ENCODE measurements at regions of chr2 and their contacts with region 1.

Region 1: DNA sequence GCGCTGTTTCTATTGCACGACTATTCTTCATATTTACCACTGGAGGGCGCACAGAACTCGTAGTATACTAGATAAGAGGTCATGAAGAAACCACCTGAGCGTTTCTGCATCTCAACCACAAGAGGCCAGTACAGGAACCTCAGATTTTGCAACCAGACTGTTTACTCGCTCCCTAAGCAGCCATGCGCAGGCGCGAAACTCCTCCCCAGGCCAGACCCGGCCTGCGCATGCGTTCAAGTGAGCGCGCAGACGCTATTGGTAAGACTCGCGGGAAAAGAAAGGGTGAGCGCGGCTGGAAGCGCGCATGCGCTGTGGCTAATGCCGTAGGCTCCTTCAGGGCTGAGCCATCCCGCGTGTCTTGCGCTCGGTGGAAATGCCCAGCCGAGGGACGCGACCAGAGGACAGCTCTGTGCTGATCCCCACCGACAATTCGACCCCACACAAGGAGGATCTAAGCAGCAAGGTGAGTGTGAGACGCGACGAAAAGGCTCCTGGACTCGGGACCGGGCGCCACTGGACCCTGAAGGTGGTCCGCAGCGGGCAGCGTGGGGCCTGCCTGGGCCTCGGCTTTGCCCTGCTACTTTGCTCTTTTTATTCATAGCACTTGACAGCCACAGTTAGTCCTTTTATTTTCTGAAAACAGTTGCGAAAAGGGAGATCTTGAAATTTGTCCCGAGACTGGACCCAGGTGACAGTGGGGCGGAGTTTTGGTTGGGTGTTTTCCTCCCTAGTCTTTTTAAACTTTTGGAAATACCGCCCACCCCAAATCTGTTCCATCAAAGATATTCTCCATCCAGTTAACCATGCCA is at the start of gene ASNSD1:
- DNase-seq: peak; percentile 97 to 100 (median 99)
- ATAC-seq: peak; percentile 97
- H3K4me3 ChIP-seq: peak within 1 kb of the TSS; percentile 86
- H3K4me3 Mint-ChIP-seq: no peak within 1 kb of the TSS
- H3K27ac ChIP-seq: peak within 1 kb of the TSS; percentile 95
- H3K27ac Mint-ChIP-seq: peak within 1 kb of the TSS in 1 of 9 donors; percentile 91
- H3K4me1 ChIP-seq: peaks cover 32 to 38% of the 10 kb centered on the region in 2 donors
- H3K4me1 Mint-ChIP-seq: peaks cover 32 to 62% (median 43%) of the 10 kb centered on the region in 7 donors
- H3K27me3 ChIP-seq: no peaks in the 10 kb centered on the region
- H3K27me3 Mint-ChIP-seq: no peaks in the 10 kb centered on the region
- total RNA-seq, gene ASNSD1: 24.0 to 48.9 (median 40.7) TPM

Region 2: GRCh38 chr2:189521699-189522434 is 139.5 kb before region 1 on chr2:
- CTCF ChIA-PET with region 1: no interaction called
- POLR2A ChIA-PET with region 1: no interaction called
- intact Hi-C with region 1: no loop called
- DNase-seq: no peak
- ATAC-seq: peak; percentile 36
- H3K4me3 ChIP-seq: no peak overlapping the region
- H3K4me3 Mint-ChIP-seq: no peak overlapping the region
- H3K27ac ChIP-seq: no peak overlapping the region
- H3K27ac Mint-ChIP-seq: no peak overlapping the region
- H3K4me1 ChIP-seq: no peaks in the 10 kb centered on the region
- H3K4me1 Mint-ChIP-seq: no peaks in the 10 kb centered on the region
- H3K27me3 ChIP-seq: no peaks in the 10 kb centered on the region
- H3K27me3 Mint-ChIP-seq: peaks cover 0 to 4% (median 0%) of the 10 kb centered on the region in 5 donors

Region 3: GRCh38 chr2:189580658-189581353 is 80.5 kb before region 1 on chr2 and contains the start of gene SLC40A1:
- CTCF ChIA-PET with region 1: interaction called, 3 read pairs
- POLR2A ChIA-PET with region 1: interaction called, 25 read pairs
- intact Hi-C with region 1: loop called (anchors 1 to 2 kb)
- DNase-seq: peak; percentile 54 to 75 (median 66)
- ATAC-seq: peak; percentile 96
- H3K4me3 ChIP-seq: peak within 1 kb of the TSS; percentile 79
- H3K4me3 Mint-ChIP-seq: peak within 1 kb of the TSS; percentile 83 to 100 (median 93)
- H3K27ac ChIP-seq: peak within 1 kb of the TSS; percentile 80
- H3K27ac Mint-ChIP-seq: peak within 1 kb of the TSS; percentile 30 to 98 (median 87)
- H3K4me1 ChIP-seq: peaks cover 0 to 12% of the 10 kb centered on the region in 2 donors
- H3K4me1 Mint-ChIP-seq: peaks cover 24 to 63% (median 56%) of the 10 kb centered on the region in 7 donors
- H3K27me3 ChIP-seq: peaks cover 0 to 5% of the 10 kb centered on the region in 2 donors
- H3K27me3 Mint-ChIP-seq: peaks cover 0 to 47% (median 0%) of the 10 kb centered on the region in 5 donors
- total RNA-seq, gene SLC40A1: 4.2 to 38.0 (median 24.4) TPM

Region 4: DNA sequence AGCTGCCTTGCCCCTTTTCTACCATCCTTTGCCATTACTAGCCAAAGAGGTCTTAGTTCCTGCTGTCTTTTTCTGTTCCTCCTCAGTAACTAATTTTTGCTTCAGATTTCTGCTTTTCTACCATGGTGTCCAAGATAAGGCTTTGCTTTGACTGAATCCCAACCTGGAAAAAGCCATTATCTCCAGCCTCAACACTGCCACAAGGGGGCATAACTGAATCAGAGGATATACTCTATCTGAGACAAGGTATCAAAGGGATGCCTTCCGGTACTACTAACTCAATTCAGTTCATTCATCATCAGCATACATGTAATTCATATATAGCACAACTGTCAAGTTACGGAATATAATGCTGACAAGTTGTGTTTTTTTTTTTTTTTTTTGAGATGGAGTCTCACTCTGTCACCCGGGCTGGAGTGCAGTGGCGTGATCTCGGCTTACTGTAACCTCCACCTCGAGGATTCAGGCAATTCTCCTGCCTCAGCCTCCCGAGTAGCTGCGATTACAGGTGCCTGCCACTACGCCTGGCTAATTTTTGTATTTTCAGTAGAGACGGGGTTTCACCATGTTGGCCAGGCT is 89.8 kb after region 1 on chr2:
- CTCF ChIA-PET with region 1: interaction called, 12 read pairs
- POLR2A ChIA-PET with region 1: no interaction called
- intact Hi-C with region 1: loop called (anchors 1 to 2 kb)
- DNase-seq: peak in 7 of 9 donors; percentile 26 to 63 (median 49)
- ATAC-seq: peak; percentile 87
- H3K4me3 ChIP-seq: no peak overlapping the region
- H3K4me3 Mint-ChIP-seq: no peak overlapping the region
- H3K27ac ChIP-seq: no peak overlapping the region
- H3K27ac Mint-ChIP-seq: peak overlapping the region in 1 of 9 donors; percentile 1
- H3K4me1 ChIP-seq: no peaks in the 10 kb centered on the region
- H3K4me1 Mint-ChIP-seq: peaks cover 0 to 4% (median 0%) of the 10 kb centered on the region in 7 donors
- H3K27me3 ChIP-seq: no peaks in the 10 kb centered on the region
- H3K27me3 Mint-ChIP-seq: no peaks in the 10 kb centered on the region

Region 5: DNA sequence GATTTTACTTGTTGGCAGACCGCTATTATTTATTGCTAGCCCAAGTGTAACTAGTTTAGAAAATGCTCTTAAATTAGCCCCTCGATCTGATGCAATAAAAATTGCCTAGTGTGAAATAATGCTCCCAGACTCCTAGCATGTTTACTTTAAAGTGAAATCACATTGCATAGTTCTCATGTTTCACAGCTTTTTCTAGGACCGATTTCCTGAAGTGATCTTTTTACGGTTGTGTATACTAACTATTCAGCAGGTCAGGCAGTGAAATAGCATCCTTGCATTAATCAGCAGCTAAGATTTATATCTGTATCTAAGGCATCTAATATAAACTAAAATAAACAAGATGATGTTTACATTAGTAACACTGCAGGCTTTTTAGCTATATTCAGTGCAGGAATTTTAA is 175.3 kb after region 1 on chr2:
- CTCF ChIA-PET with region 1: no interaction called
- POLR2A ChIA-PET with region 1: no interaction called
- intact Hi-C with region 1: no loop called
- DNase-seq: no peak
- ATAC-seq: no peak
- H3K4me3 ChIP-seq: no peak overlapping the region
- H3K4me3 Mint-ChIP-seq: no peak overlapping the region
- H3K27ac ChIP-seq: no peak overlapping the region
- H3K27ac Mint-ChIP-seq: no peak overlapping the region
- H3K4me1 ChIP-seq: no peaks in the 10 kb centered on the region
- H3K4me1 Mint-ChIP-seq: peaks cover 0 to 8% (median 0%) of the 10 kb centered on the region in 7 donors
- H3K27me3 ChIP-seq: no peaks in the 10 kb centered on the region
- H3K27me3 Mint-ChIP-seq: no peaks in the 10 kb centered on the region

Region 6: DNA sequence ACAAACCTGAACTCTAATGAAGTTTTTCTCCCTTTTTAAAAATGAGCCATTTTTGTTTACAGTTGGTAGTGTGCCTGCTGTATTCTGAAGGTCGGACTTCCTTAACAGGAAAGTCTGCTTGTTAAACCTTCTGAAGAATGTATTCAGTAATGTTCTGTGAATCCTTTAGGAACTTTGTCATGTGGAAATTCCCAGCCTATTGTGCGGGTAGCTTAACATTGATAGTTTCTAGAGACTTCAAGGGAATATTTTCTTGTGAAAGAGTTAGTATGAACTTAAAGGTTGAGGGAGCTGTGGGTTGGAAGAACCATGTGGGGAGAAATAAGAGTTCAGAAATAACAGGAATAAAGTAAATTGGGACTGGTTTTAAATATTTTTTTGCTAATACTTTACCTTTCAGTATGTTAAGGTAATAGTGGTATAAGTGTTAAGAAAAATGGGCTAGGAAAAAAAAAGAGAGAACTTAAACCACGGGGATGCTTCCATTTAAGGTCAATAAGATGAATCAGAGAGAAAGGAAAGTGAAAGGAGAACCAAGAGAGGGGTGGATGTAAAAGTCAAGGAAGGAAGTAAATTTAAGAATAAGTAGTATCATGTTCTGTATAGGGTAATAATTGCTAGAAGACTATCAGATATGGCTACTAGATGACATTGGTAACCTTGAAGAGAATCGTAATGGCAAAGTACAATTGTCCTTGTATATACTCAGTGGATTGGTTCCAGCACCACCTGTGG is 213.4 kb after region 1 on chr2:
- CTCF ChIA-PET with region 1: no interaction called
- POLR2A ChIA-PET with region 1: no interaction called
- intact Hi-C with region 1: loop called in 1 of 2 experiments (anchors 5 kb)
- DNase-seq: no peak
- ATAC-seq: peak; percentile 38
- H3K4me3 ChIP-seq: no peak overlapping the region
- H3K4me3 Mint-ChIP-seq: peak overlapping the region in 1 of 10 donors; percentile 26
- H3K27ac ChIP-seq: no peak overlapping the region
- H3K27ac Mint-ChIP-seq: peak overlapping the region in 4 of 9 donors; percentile 0 to 75 (median 20)
- H3K4me1 ChIP-seq: no peaks in the 10 kb centered on the region
- H3K4me1 Mint-ChIP-seq: peaks cover 5 to 17% (median 7%) of the 10 kb centered on the region in 7 donors
- H3K27me3 ChIP-seq: no peaks in the 10 kb centered on the region
- H3K27me3 Mint-ChIP-seq: no peaks in the 10 kb centered on the region

Region 7: DNA sequence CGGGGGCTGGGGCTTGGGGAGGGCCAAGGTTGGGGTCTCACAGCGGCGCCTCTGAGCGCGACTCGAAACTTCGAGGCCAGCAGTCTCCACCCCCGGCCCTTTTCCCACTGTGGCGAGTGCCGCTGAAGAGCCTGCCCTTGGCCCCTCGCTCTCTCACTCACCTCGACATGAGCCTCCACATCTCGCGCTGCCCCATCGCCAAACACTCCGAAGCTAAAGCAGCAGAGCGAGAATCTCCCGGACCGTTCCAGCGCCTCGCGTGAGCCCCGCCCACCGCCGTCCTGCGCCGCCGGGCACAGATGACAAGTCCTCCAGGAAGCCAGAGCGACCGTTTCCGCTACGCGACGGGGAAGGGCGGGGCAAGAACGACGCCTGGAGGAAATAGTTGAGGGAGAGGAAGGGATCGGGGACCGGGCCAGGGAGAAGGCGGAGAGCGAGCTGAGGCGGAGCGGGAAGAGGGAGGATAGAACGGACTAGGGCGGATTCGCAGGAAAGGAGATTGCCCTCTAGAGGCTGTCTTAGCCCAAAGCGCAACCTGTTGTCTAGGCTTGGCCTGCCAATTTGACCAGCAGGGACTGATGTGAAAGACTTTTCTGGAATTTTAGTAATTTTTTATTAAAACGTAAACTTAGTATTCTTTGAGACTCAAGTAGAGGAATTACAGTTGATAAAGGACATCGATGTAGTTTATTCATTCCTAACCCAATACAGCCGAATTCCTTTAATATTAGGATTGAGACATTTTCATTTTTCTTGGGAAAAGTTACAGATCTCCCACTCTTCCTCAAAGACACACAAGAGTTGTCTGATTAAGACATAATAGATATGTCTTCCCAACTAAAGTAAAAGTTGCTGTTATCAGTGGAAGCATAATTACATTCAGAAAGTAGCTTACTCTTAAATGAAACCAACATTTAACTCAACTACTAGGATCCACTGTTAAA is 658.5 kb after region 1 on chr2 and contains the start of gene HIBCH:
- CTCF ChIA-PET with region 1: no interaction called
- POLR2A ChIA-PET with region 1: no interaction called
- intact Hi-C with region 1: loop called in 1 of 2 experiments (anchors 1 kb)
- DNase-seq: peak; percentile 56 to 88 (median 68)
- ATAC-seq: peak; percentile 94
- H3K4me3 ChIP-seq: peak within 1 kb of the TSS; percentile 83
- H3K4me3 Mint-ChIP-seq: peak within 1 kb of the TSS; percentile 85 to 100 (median 97)
- H3K27ac ChIP-seq: peak within 1 kb of the TSS; percentile 82
- H3K27ac Mint-ChIP-seq: peak within 1 kb of the TSS; percentile 91 to 99 (median 95)
- H3K4me1 ChIP-seq: peaks cover 8 to 13% of the 10 kb centered on the region in 2 donors
- H3K4me1 Mint-ChIP-seq: peaks cover 27 to 54% (median 48%) of the 10 kb centered on the region in 7 donors
- H3K27me3 ChIP-seq: no peaks in the 10 kb centered on the region
- H3K27me3 Mint-ChIP-seq: no peaks in the 10 kb centered on the region
- total RNA-seq, gene HIBCH: 11.3 to 25.0 (median 21.6) TPM

Region 8: GRCh38 chr2:190648289-190649034 is 987.1 kb after region 1 on chr2:
- CTCF ChIA-PET with region 1: no interaction called
- POLR2A ChIA-PET with region 1: no interaction called
- intact Hi-C with region 1: loop called (anchors 5 to 10 kb)
- DNase-seq: peak; percentile 83 to 93 (median 89)
- ATAC-seq: peak; percentile 91
- H3K4me3 ChIP-seq: peak overlapping the region; percentile 62
- H3K4me3 Mint-ChIP-seq: peak overlapping the region; percentile 76 to 92 (median 88)
- H3K27ac ChIP-seq: peak overlapping the region; percentile 92
- H3K27ac Mint-ChIP-seq: peak overlapping the region; percentile 15 to 98 (median 90)
- H3K4me1 ChIP-seq: peaks cover 10 to 16% of the 10 kb centered on the region in 2 donors
- H3K4me1 Mint-ChIP-seq: peaks cover 10 to 54% (median 47%) of the 10 kb centered on the region in 7 donors
- H3K27me3 ChIP-seq: no peaks in the 10 kb centered on the region
- H3K27me3 Mint-ChIP-seq: no peaks in the 10 kb centered on the region